Dendritic cell treated with granulocyte-macrophage colony-stimulating factor and Interleukin-4, amounts not matched to agents 40 ng/mL and 50 ng/mL, for 4 days (primary cell): ENCODE measurements at regions of chrX and their contacts with region 1.

Region 1: GRCh38 chrX:78555401-78555980 is 103.6 kb downstream of the RTL3 start:
- H3K4me3 Mint-ChIP-seq: no peak overlapping the region
- H3K27ac Mint-ChIP-seq: no peak overlapping the region
- H3K4me1 Mint-ChIP-seq: peaks cover 5% of the 10 kb centered on the region
- H3K27me3 Mint-ChIP-seq: no peaks in the 10 kb centered on the region

Region 2: GRCh38 chrX:78708262-78708661 is 152.8 kb after region 1 on chrX:
- intact Hi-C with region 1: loop called (anchors 2 kb)
- H3K4me3 Mint-ChIP-seq: no peak overlapping the region
- H3K27ac Mint-ChIP-seq: no peak overlapping the region
- H3K4me1 Mint-ChIP-seq: peaks cover 4% of the 10 kb centered on the region
- H3K27me3 Mint-ChIP-seq: no peaks in the 10 kb centered on the region

Region 3: DNA sequence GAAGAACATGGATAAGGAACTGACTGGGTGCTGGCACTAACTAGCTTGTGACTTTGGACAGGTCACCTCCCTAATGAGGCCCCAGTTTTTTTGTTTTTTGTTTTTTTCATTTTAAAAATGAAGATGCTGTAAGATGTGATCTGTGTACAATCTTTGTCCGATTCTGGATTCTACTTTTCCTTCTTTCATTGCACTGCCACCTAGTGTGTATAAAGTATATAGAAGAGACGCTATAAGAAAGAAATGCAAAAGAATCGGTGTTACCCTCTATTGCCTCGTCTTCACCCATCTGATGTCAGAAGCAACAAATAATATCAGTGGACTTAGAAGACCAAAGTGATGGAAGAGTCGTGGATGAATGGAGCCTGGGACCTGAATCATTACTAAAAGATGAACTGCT is 331.1 kb after region 1 on chrX:
- intact Hi-C with region 1: loop called (anchors 10 kb)
- H3K4me3 Mint-ChIP-seq: no peak overlapping the region
- H3K27ac Mint-ChIP-seq: no peak overlapping the region
- H3K4me1 Mint-ChIP-seq: peaks cover 7% of the 10 kb centered on the region
- H3K27me3 Mint-ChIP-seq: no peaks in the 10 kb centered on the region

Region 4: DNA sequence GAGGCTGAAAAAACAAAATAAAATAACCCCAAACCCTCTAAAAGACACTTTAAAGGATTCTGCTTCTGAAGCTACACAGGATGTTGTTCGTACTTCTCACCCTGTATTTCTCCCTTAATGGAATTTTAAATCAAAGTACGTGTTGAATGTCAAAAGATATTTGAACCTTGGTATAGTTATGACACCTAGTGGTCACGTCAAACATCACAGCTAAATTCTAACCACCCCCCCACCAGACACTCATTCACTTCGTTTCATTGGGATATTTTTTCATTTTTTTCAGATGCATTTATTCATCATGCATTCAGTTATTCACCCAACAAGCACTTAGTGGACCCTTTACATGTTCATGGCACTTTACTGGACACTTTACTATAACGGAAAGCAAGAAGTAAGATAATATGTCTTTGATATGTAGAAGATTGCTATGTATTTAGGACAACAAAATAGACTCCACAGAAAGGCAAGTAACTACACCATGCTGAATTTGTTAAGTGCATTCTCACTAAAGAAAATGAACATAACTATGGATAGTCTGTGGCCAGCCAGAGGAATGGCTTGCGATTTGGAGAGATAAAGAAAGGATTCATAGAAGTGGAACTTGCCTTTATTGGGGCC is 526.5 kb after region 1 on chrX:
- intact Hi-C with region 1: loop called (anchors 2 kb)
- H3K4me3 Mint-ChIP-seq: no peak overlapping the region
- H3K27ac Mint-ChIP-seq: peak overlapping the region; percentile 22
- H3K4me1 Mint-ChIP-seq: peaks cover 4% of the 10 kb centered on the region
- H3K27me3 Mint-ChIP-seq: no peaks in the 10 kb centered on the region

Region 5: GRCh38 chrX:79270401-79270800 is 714.9 kb after region 1 on chrX:
- intact Hi-C with region 1: loop called (anchors 5 kb)
- H3K4me3 Mint-ChIP-seq: no peak overlapping the region
- H3K27ac Mint-ChIP-seq: no peak overlapping the region
- H3K4me1 Mint-ChIP-seq: no peaks in the 10 kb centered on the region
- H3K27me3 Mint-ChIP-seq: no peaks in the 10 kb centered on the region

Region 6: GRCh38 chrX:79412972-79413371 is 857.5 kb after region 1 on chrX:
- intact Hi-C with region 1: loop called (anchors 10 kb)
- H3K4me3 Mint-ChIP-seq: no peak overlapping the region
- H3K27ac Mint-ChIP-seq: no peak overlapping the region
- H3K4me1 Mint-ChIP-seq: no peaks in the 10 kb centered on the region
- H3K27me3 Mint-ChIP-seq: no peaks in the 10 kb centered on the region

Region 7: GRCh38 chrX:79444694-79445210 is 889.3 kb after region 1 on chrX:
- intact Hi-C with region 1: loop called (anchors 10 kb)
- H3K4me3 Mint-ChIP-seq: no peak overlapping the region
- H3K27ac Mint-ChIP-seq: no peak overlapping the region
- H3K4me1 Mint-ChIP-seq: no peaks in the 10 kb centered on the region
- H3K27me3 Mint-ChIP-seq: no peaks in the 10 kb centered on the region